ENCODE measurements at regions of chr4 and their contacts with region 1.

Region 1: GRCh38 chr4:17614416-17615299 is at the start of gene MED28:
- DNase-seq: peak; percentile 99
- ATAC-seq: peak; percentile 87
- H3K4me3 Mint-ChIP-seq: peak within 1 kb of the TSS; percentile 100
- H3K27ac Mint-ChIP-seq: peak within 1 kb of the TSS; percentile 98
- H3K4me1 Mint-ChIP-seq: peaks cover 35% of the 10 kb centered on the region
- H3K27me3 Mint-ChIP-seq: peaks cover 1% of the 10 kb centered on the region
- CTCF ChIP-seq: no peak
- total RNA-seq, gene MED28: 56.3 to 60.8 TPM

Region 2: DNA sequence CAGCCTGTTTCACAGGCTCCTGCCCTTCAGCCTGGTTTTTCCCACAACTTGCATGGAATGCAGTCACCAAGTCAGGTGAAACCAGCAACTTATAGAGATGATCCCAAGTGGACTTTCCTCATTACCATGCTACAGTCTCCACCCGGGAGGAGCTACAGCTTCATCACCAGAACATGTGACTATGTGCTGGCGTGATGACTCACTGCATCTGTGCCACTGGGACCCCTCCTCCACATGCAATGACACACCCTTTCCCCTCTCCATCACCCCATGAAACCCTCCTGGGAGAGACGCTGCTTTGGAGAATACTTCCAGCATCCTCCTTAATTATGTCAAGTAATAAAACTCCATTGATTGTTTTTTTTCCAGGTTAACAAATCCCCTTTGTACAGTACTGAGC is 120.4 kb before region 1 on chr4:
- CTCF ChIA-PET with region 1: no interaction called
- POLR2A ChIA-PET with region 1: no interaction called
- intact Hi-C with region 1: no loop called
- DNase-seq: peak; percentile 21
- ATAC-seq: peak; percentile 58
- H3K4me3 Mint-ChIP-seq: no peak overlapping the region
- H3K27ac Mint-ChIP-seq: peak overlapping the region; percentile 9
- H3K4me1 Mint-ChIP-seq: peaks cover 15% of the 10 kb centered on the region
- H3K27me3 Mint-ChIP-seq: no peaks in the 10 kb centered on the region
- CTCF ChIP-seq: no peak

Region 3: GRCh38 chr4:17576932-17577665 is 37.6 kb before region 1 on chr4 and contains the start of gene LAP3:
- CTCF ChIA-PET with region 1: interaction called, 3 read pairs
- POLR2A ChIA-PET with region 1: interaction called, 24 read pairs
- intact Hi-C with region 1: loop called (anchors 1 kb)
- DNase-seq: peak; percentile 97
- ATAC-seq: peak; percentile 88
- H3K4me3 Mint-ChIP-seq: peak within 1 kb of the TSS; percentile 94
- H3K27ac Mint-ChIP-seq: peak within 1 kb of the TSS; percentile 93
- H3K4me1 Mint-ChIP-seq: peaks cover 23% of the 10 kb centered on the region
- H3K27me3 Mint-ChIP-seq: no peaks in the 10 kb centered on the region
- CTCF ChIP-seq: no peak
- total RNA-seq, gene LAP3: 100 to 101 TPM

Region 4: DNA sequence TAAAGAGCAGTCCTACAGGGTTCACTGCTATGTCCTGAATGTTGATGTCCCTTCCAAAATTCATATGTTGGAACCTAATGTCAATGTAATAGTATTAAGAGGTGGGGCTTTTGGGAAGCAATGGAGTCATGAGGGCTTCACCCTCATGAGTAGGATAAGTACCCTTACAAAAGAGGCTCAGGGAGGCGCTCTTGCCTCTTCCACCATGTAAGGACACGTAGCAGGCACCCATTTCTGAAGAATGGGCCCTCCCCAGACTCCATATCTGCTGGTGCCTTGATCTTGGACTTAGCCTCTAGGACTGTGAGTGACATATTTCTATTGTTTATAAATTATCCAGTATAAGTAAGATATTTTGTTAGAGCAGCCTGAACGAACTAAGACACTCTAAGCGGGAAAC is 15.6 kb after region 1 on chr4:
- CTCF ChIA-PET with region 1: no interaction called
- POLR2A ChIA-PET with region 1: interaction called, 13 read pairs
- intact Hi-C with region 1: no loop called
- DNase-seq: no peak
- ATAC-seq: no peak
- H3K4me3 Mint-ChIP-seq: no peak overlapping the region
- H3K27ac Mint-ChIP-seq: no peak overlapping the region
- H3K4me1 Mint-ChIP-seq: peaks cover 11% of the 10 kb centered on the region
- H3K27me3 Mint-ChIP-seq: no peaks in the 10 kb centered on the region
- CTCF ChIP-seq: no peak